Calu3 (cell line): ENCODE measurements at regions of chr20 and their contacts with region 1.

Region 1: DNA sequence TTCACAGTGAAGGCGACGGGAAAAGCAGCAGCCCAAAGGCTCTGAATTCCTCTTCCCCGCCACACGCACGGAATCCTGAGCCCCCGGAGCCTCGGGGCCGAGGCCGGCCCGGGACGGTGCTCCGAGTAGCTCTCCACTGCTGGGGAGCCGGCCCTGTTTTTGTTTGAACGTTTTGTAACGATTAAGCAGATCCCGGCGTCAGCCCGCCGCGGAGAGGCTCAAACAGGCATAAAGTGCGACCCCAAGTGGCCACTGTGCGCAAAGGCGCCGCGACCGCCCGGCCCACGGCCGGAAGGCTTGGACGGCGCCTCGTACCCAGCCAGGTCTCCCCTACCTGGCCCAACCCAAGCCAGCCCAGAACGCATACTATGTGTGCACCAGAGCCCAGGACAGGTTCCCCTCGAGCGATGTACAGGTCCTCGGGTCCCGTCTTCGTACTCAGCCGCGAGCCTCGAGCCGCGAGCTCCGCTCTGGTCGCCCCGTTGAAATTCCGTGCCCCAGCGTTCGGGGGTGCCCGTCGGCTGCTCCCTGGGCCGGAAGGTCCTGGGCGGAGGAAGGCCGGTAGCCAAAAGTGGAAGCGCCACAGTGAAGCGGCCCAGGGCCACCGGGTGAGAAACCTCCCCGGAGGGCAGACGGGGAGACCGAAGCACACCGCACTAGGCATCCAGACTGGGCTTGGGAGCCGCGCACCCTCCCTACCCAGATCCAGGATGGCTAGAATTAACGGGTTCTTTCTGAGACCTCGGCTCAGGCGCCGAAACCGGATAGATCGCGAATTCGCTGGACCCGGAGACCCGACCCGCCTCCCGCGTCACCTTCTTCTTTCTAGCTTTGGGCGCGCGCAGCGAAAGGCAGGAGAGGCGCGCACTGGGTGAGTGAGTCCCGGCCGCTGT is 1.2 kb upstream of the MAFB start:
- DNase-seq: peak; percentile 95
- H3K4me3 Mint-ChIP-seq: peak overlapping the region; percentile 69
- H3K27ac Mint-ChIP-seq: no peak overlapping the region
- H3K4me1 Mint-ChIP-seq: peaks cover 6% of the 10 kb centered on the region
- H3K27me3 Mint-ChIP-seq: peaks cover 100% of the 10 kb centered on the region
- CTCF ChIP-seq: peak; percentile 96

Region 2: GRCh38 chr20:39117491-39117890 is 1572.7 kb before region 1 on chr20:
- CTCF ChIA-PET with region 1: no interaction called
- intact Hi-C with region 1: loop called (anchors 5 kb)
- DNase-seq: peak; percentile 87
- H3K4me3 Mint-ChIP-seq: no peak overlapping the region
- H3K27ac Mint-ChIP-seq: no peak overlapping the region
- H3K4me1 Mint-ChIP-seq: peaks cover 8% of the 10 kb centered on the region
- H3K27me3 Mint-ChIP-seq: peaks cover 84% of the 10 kb centered on the region
- CTCF ChIP-seq: no peak

Region 3: DNA sequence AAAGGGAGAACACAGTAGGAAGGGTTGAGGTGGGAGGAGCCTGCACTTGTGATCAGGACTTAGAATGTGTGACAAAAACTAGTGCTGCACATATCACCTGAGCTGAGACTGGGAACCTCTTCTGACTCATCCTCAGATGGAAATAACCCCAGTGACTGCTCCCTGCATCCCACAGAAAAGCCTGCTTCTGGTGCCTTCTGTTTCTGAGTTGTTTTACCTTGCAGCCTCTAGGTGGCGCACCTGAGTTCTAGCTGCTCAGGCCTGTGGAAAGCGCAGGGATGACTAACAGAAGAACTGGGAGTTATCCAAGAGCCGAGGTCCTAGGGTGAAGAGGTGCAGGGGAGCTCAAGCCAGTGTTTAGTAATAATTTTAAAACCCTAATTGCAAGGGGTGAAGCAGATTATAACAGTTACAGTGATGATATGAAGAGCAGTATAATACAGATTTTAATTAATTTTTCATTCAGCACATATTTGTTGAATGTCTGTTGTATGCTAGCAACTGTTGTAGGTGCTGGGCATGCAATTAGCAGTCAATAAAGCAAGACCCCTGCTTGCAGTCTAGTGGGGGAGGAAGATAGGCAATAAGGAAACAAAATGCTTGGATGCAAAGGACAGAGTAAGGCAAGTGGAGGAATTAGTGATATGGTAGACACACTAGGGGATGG is 1425.5 kb before region 1 on chr20:
- CTCF ChIA-PET with region 1: interaction called, 3 read pairs
- intact Hi-C with region 1: loop called (anchors 10 kb)
- DNase-seq: peak; percentile 81
- H3K4me3 Mint-ChIP-seq: no peak overlapping the region
- H3K27ac Mint-ChIP-seq: no peak overlapping the region
- H3K4me1 Mint-ChIP-seq: no peaks in the 10 kb centered on the region
- H3K27me3 Mint-ChIP-seq: peaks cover 75% of the 10 kb centered on the region
- CTCF ChIP-seq: peak; percentile 98

Region 4: GRCh38 chr20:40160097-40160550 is 530.1 kb before region 1 on chr20:
- CTCF ChIA-PET with region 1: no interaction called
- intact Hi-C with region 1: loop called (anchors 1 kb)
- DNase-seq: peak; percentile 55
- H3K4me3 Mint-ChIP-seq: no peak overlapping the region
- H3K27ac Mint-ChIP-seq: no peak overlapping the region
- H3K4me1 Mint-ChIP-seq: no peaks in the 10 kb centered on the region
- H3K27me3 Mint-ChIP-seq: no peaks in the 10 kb centered on the region
- CTCF ChIP-seq: peak; percentile 69

Region 5: DNA sequence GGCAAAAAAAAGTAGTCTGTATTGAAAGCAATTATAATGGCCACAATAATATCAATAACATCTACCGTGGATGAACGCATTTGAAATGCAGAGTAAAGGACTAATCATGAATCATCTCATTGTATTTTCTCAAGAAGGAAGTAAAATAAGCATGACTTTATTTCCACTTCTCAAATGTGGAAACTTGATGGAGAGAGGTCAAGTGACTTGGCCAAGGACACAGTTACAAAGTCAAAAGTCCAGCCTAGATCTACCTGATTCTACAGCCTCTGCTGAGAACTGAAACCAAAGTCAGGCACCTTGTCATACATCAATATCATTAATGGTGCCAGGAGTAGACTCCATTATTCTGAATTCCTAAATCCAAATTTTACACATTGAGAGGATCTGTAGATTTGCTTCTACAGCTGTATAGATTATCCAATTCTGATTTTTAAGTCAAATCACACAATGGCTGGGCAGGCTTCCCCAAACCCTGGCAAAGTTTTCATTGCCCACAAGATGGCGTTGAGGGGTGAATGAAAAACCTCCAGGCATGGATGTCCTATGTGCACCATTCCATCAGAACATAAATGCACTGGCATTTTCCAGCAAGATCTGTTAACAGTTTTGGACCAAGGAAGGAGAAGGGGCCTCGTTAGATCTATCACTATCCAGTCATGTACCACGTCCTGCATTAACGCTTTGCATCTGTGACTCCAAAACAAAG is 424.2 kb before region 1 on chr20:
- CTCF ChIA-PET with region 1: interaction called, 6 read pairs
- intact Hi-C with region 1: loop called (anchors 1 kb)
- DNase-seq: peak; percentile 49
- H3K4me3 Mint-ChIP-seq: no peak overlapping the region
- H3K27ac Mint-ChIP-seq: no peak overlapping the region
- H3K4me1 Mint-ChIP-seq: no peaks in the 10 kb centered on the region
- H3K27me3 Mint-ChIP-seq: peaks cover 56% of the 10 kb centered on the region
- CTCF ChIP-seq: peak; percentile 47

Region 6: GRCh38 chr20:40442181-40442963 is 247.8 kb before region 1 on chr20:
- CTCF ChIA-PET with region 1: interaction called, 3 read pairs
- intact Hi-C with region 1: loop called (anchors 10 kb)
- DNase-seq: peak; percentile 12
- H3K4me3 Mint-ChIP-seq: no peak overlapping the region
- H3K27ac Mint-ChIP-seq: no peak overlapping the region
- H3K4me1 Mint-ChIP-seq: no peaks in the 10 kb centered on the region
- H3K27me3 Mint-ChIP-seq: peaks cover 53% of the 10 kb centered on the region
- CTCF ChIP-seq: no peak